CD8-positive, alpha-beta T cell (primary cell): ENCODE measurements at regions of chr4 and their contacts with region 1.

Region 1: GRCh38 chr4:2811830-2812611 is 19.1 kb downstream of the SH3BP2 start:
- DNase-seq: peak in 8 of 9 experiments; percentile 39 to 82 (median 62)
- ATAC-seq: peak; percentile 62
- H3K4me3 ChIP-seq: peak overlapping the region; percentile 85 to 87
- H3K4me3 Mint-ChIP-seq: peak overlapping the region; percentile 96
- H3K27ac ChIP-seq: peak overlapping the region; percentile 72 to 84
- H3K27ac Mint-ChIP-seq: peak overlapping the region; percentile 98
- H3K4me1 ChIP-seq: peaks cover 47% of the 10 kb centered on the region
- H3K4me1 Mint-ChIP-seq: peaks cover 51% of the 10 kb centered on the region
- H3K27me3 ChIP-seq: no peaks in the 10 kb centered on the region
- H3K27me3 Mint-ChIP-seq: no peaks in the 10 kb centered on the region
- CTCF ChIP-seq: no peak

Region 2: DNA sequence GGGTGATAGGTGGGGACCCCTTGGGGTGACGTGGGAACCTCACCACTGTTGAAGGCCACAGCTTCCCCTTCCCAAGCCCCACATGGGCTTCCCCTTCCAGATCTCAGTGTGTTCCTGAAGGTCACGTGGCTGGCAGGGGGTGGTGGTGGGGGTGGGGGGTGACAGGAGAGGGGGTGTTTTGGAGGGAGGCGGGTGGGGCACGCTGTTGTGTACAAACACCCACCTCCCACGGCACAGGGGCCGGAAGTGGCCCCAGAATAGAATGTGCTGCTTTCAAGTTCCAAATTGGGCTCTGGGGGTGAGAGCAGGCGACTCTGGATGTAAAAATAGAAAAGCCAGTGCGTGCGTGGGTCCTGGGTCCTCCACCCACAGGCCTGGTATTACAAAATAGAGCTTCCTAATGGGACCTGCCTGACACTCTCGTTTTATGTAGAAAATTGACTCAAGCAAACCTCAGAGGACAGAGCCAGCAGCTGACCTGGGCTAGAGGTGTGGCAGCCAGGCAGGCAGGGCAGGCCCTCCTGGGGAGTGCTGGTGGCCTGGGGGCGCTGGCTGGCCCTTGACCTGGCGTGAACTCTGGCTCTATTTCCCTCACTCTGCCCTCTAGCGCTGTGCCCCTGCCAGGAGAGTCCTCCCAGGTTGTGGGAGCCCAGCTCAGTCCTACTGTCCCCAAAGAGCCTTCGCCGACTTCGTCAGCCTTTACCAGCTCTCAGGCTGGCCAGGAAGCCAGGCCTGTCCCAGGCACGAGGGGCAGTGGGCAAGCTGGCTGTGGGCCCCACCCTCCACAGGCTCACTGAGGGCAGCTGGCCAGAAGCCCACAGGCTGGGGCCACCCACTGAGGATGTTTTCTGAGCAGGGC is 24.6 kb before region 1 on chr4:
- CTCF ChIA-PET with region 1: no interaction called
- POLR2A ChIA-PET with region 1: interaction called, 16 read pairs
- intact Hi-C with region 1: no loop called
- DNase-seq: peak in 6 of 9 experiments; percentile 49 to 87 (median 70)
- ATAC-seq: peak; percentile 46
- H3K4me3 ChIP-seq: peak overlapping the region in 1 of 2 experiments; percentile 35
- H3K4me3 Mint-ChIP-seq: peak overlapping the region; percentile 43
- H3K27ac ChIP-seq: peak overlapping the region; percentile 36 to 88
- H3K27ac Mint-ChIP-seq: peak overlapping the region; percentile 93
- H3K4me1 ChIP-seq: peaks cover 40% of the 10 kb centered on the region
- H3K4me1 Mint-ChIP-seq: peaks cover 47% of the 10 kb centered on the region
- H3K27me3 ChIP-seq: no peaks in the 10 kb centered on the region
- H3K27me3 Mint-ChIP-seq: no peaks in the 10 kb centered on the region
- CTCF ChIP-seq: no peak

Region 3: DNA sequence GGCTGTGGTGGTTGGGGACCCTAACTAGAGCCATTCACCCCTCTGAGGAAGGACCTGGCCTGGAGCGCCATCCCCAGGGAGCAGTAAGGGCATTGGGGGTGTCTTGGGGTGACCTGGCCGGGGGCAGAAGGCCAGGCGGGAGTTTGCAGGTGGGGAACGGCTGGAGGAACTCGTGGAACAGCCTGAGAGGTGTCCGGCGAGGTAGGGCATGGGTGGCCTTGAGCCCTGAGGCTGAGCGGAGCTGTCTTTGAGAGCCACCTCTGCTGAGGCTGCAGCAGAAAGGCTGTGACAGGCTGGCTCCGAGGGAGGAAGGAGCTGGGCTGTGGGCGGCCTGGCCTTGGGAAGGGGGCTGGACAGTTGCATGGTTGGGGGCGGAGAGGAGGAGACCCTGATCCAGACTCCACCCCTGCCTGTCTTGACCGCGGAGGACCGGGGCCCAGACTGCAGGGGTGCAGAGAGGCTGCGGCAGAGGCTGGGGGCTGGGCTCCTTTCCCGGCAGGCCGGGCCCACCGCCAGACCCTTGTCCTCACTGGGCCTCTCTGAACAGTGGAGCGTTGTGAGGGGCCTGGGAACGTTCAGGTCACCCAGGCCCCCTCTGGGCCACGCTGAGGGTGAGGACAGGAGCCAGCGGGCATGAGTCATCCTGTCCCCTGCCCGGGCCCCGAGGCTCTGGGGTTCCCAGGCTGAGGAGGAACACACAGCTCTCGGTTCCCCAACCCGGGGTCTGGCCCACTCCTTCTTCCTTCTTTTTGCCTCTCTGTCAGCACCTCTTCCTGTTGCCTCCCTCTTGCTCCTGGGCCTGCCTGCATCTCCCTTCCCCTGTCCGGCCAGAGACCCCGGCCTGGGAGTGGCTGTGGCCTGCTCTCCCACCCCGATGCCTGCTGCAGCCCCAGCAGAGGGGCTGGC is 11.1 kb before region 1 on chr4:
- CTCF ChIA-PET with region 1: interaction called, 3 read pairs
- POLR2A ChIA-PET with region 1: interaction called, 18 read pairs
- intact Hi-C with region 1: no loop called
- DNase-seq: peak in 3 of 9 experiments; percentile 14 to 45 (median 21)
- ATAC-seq: no peak
- H3K4me3 ChIP-seq: no peak overlapping the region
- H3K4me3 Mint-ChIP-seq: peak overlapping the region; percentile 22
- H3K27ac ChIP-seq: no peak overlapping the region
- H3K27ac Mint-ChIP-seq: no peak overlapping the region
- H3K4me1 ChIP-seq: peaks cover 47% of the 10 kb centered on the region
- H3K4me1 Mint-ChIP-seq: peaks cover 33% of the 10 kb centered on the region
- H3K27me3 ChIP-seq: no peaks in the 10 kb centered on the region
- H3K27me3 Mint-ChIP-seq: no peaks in the 10 kb centered on the region
- CTCF ChIP-seq: no peak

Region 4: GRCh38 chr4:2837904-2838496 is 26.0 kb after region 1 on chr4:
- CTCF ChIA-PET with region 1: interaction called, 3 read pairs
- POLR2A ChIA-PET with region 1: interaction called, 11 read pairs
- intact Hi-C with region 1: no loop called
- DNase-seq: peak; percentile 43 to 91 (median 80)
- ATAC-seq: peak; percentile 96
- H3K4me3 ChIP-seq: peak overlapping the region; percentile 41 to 42
- H3K4me3 Mint-ChIP-seq: peak overlapping the region; percentile 81
- H3K27ac ChIP-seq: peak overlapping the region; percentile 40 to 74
- H3K27ac Mint-ChIP-seq: peak overlapping the region; percentile 94
- H3K4me1 ChIP-seq: peaks cover 60% of the 10 kb centered on the region
- H3K4me1 Mint-ChIP-seq: peaks cover 68% of the 10 kb centered on the region
- H3K27me3 ChIP-seq: no peaks in the 10 kb centered on the region
- H3K27me3 Mint-ChIP-seq: no peaks in the 10 kb centered on the region
- CTCF ChIP-seq: no peak

Region 5: DNA sequence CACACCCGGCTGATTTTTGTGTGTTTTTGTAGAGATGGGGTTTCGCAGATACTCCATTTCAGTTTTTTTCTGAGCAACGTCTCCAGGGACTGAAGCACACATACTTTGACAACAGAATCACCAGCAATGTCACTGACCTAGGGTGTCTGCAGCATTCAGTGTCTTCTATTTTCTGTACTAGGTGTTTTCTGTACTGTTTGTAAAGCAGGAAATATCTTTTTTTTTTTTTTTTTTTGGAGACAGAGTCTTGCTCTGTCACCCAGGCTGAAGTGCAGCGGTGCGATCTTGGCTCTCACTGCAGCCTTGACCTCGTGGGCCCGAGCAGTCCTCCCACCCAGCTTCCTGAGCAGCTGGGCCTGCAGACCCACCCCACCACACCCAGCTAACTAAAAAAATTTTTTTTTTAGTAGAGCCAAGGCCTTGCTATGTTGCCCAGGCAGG is 40.5 kb after region 1 on chr4:
- CTCF ChIA-PET with region 1: interaction called, 4 read pairs
- POLR2A ChIA-PET with region 1: no interaction called
- intact Hi-C with region 1: loop called (anchors 5 kb)
- DNase-seq: peak in 2 of 9 experiments; percentile 35 to 56
- ATAC-seq: peak; percentile 72
- H3K4me3 ChIP-seq: no peak overlapping the region
- H3K4me3 Mint-ChIP-seq: peak overlapping the region; percentile 75
- H3K27ac ChIP-seq: peak overlapping the region; percentile 6 to 68
- H3K27ac Mint-ChIP-seq: peak overlapping the region; percentile 92
- H3K4me1 ChIP-seq: peaks cover 60% of the 10 kb centered on the region
- H3K4me1 Mint-ChIP-seq: peaks cover 71% of the 10 kb centered on the region
- H3K27me3 ChIP-seq: no peaks in the 10 kb centered on the region
- H3K27me3 Mint-ChIP-seq: no peaks in the 10 kb centered on the region
- CTCF ChIP-seq: no peak

Region 6: DNA sequence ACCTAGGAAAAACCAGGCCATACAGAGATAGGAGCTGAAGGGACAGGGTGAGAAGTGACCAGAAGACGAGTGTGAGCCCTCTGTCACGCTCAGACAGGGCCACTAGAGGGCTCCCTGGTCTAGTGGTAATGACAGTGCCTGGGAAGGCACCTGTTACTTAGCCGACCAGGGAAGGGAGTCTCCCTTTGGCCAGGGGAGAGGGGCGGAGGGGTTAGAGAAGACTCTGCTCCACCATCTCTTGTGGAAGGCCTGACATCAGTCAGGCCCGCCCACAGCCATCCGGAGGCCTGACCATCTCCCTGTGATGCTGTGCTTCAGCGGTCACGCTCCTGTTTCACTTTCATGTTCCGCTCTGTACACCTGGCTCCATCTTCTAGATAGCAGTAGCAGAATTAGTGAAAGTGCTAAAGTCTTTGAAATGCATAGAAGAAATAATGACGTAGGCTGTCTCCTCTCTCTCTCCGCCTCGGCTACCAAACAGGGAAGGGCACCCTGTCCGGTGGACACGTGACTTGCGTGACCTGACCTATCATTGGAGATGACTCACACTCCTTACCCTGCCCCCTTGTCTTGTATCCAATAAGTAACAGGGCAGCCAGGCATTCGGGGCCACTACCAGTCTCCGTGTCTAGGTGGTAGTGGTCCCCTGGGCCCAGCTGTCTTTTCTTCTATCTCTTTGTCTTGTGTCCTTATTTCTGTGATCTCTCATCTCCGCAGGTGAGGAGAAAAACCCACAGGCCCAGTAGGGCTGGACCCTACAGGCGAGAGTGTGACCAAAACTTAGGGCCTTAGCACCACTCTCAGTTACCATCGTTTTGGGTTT is 235.7 kb after region 1 on chr4:
- CTCF ChIA-PET with region 1: no interaction called
- POLR2A ChIA-PET with region 1: no interaction called
- intact Hi-C with region 1: no loop called
- DNase-seq: peak; percentile 44 to 87 (median 64)
- ATAC-seq: peak; percentile 73
- H3K4me3 ChIP-seq: peak overlapping the region; percentile 44 to 50
- H3K4me3 Mint-ChIP-seq: peak overlapping the region; percentile 78
- H3K27ac ChIP-seq: peak overlapping the region; percentile 27 to 79
- H3K27ac Mint-ChIP-seq: peak overlapping the region; percentile 60
- H3K4me1 ChIP-seq: peaks cover 15% of the 10 kb centered on the region
- H3K4me1 Mint-ChIP-seq: peaks cover 29% of the 10 kb centered on the region
- H3K27me3 ChIP-seq: no peaks in the 10 kb centered on the region
- H3K27me3 Mint-ChIP-seq: no peaks in the 10 kb centered on the region
- CTCF ChIP-seq: peak; percentile 61